ENCODE measurements at regions of chr15 and their contacts with region 1.

Region 1: GRCh38 chr15:78654272-78654671 is 13.3 kb upstream of the CHRNB4 start:
- DNase-seq: no peak
- H3K4me3 ChIP-seq: no peak overlapping the region
- H3K27ac ChIP-seq: no peak overlapping the region
- H3K4me1 ChIP-seq: no peaks in the 10 kb centered on the region
- H3K27me3 ChIP-seq: peaks cover 98% of the 10 kb centered on the region
- CTCF ChIP-seq: no peak

Region 2: GRCh38 chr15:78170848-78171773 is 483.2 kb before region 1 on chr15:
- CTCF ChIA-PET with region 1: no interaction called
- POLR2A ChIA-PET with region 1: no interaction called
- intact Hi-C with region 1: no loop called
- DNase-seq: no peak
- H3K4me3 ChIP-seq: no peak overlapping the region
- H3K27ac ChIP-seq: no peak overlapping the region
- H3K4me1 ChIP-seq: no peaks in the 10 kb centered on the region
- H3K27me3 ChIP-seq: no peaks in the 10 kb centered on the region
- CTCF ChIP-seq: no peak

Region 3: DNA sequence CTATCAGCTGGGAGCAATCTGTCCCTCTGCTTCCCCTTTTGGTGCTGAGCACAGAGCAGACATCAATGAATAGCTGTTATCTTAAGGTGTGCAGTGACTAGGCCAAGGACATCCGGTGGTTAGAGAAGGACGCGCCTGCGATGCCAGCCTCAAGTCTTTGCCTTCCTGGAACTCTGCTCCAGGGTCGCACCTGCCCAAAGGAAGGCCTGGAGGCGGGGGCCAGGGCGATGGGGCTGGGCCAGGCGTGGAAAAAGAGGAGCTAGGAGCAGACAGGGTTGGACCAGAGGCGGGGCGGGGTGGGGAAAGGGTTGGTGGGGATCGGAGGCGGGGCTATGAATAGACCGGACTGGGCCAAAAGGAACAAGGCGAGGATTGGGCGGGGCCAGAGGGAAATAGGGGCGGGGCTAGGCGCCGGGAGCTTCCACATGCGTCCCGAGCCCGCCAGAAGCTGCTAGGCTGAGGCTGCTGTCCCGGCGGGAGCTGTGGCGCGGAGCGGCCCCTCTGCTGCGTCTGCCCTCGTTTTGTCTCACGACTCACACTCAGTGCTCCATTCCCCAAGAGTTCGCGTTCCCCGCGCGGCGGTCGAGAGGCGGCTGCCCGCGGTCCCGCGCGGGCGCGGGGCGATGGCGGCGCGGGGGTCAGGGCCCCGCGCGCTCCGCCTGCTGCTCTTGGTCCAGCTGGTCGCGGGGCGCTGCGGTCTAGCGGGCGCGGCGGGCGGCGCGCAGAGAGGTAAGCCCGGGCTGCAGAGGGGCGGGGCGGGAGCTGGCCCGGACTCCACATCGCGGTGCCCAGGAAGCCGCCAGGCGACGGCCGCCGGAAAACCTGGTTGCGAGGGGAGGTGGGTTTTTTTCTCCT is 88.9 kb before region 1 on chr15 and contains the start of gene CHRNA5:
- CTCF ChIA-PET with region 1: interaction called, 10 read pairs
- POLR2A ChIA-PET with region 1: no interaction called
- intact Hi-C with region 1: no loop called
- DNase-seq: peak; percentile 94
- H3K4me3 ChIP-seq: peak within 1 kb of the TSS; percentile 68
- H3K27ac ChIP-seq: peak within 1 kb of the TSS; percentile 51
- H3K4me1 ChIP-seq: peaks cover 12% of the 10 kb centered on the region
- H3K27me3 ChIP-seq: no peaks in the 10 kb centered on the region
- CTCF ChIP-seq: no peak
- total RNA-seq, gene CHRNA5: 18.9 and 19.1 TPM in 2 replicates

Measured in A673 (cell line).